ENCODE measurements at regions of chr12 and their contacts with region 1.

Region 1: GRCh38 chr12:2902272-2902880 is 11.7 kb downstream of the TULP3 start:
- DNase-seq: no peak
- H3K4me3 ChIP-seq: no peak overlapping the region
- H3K27ac ChIP-seq: no peak overlapping the region
- H3K4me1 ChIP-seq: no peaks in the 10 kb centered on the region
- H3K27me3 ChIP-seq: no peaks in the 10 kb centered on the region
- CTCF ChIP-seq: no peak

Region 2: GRCh38 chr12:2783936-2784600 is 118.3 kb before region 1 on chr12:
- CTCF ChIA-PET with region 1: interaction called, 11 read pairs
- POLR2A ChIA-PET with region 1: no interaction called
- intact Hi-C with region 1: no loop called
- DNase-seq: peak in 1 of 2 experiments; percentile 61
- H3K4me3 ChIP-seq: no peak overlapping the region
- H3K27ac ChIP-seq: no peak overlapping the region
- H3K4me1 ChIP-seq: no peaks in the 10 kb centered on the region
- H3K27me3 ChIP-seq: peaks cover 84% of the 10 kb centered on the region
- CTCF ChIP-seq: peak; percentile 93

Region 3: GRCh38 chr12:2890388-2891239 is 11.8 kb before region 1 on chr12 and contains the start of gene TULP3:
- CTCF ChIA-PET with region 1: interaction called, 3 read pairs
- POLR2A ChIA-PET with region 1: interaction called, 22 read pairs
- intact Hi-C with region 1: no loop called
- DNase-seq: peak; percentile 93 to 99
- H3K4me3 ChIP-seq: peak within 1 kb of the TSS; percentile 80
- H3K27ac ChIP-seq: peak within 1 kb of the TSS; percentile 74
- H3K4me1 ChIP-seq: peaks cover 35% of the 10 kb centered on the region
- H3K27me3 ChIP-seq: no peaks in the 10 kb centered on the region
- CTCF ChIP-seq: no peak
- total RNA-seq, gene TULP3: 39.0 and 54.6 TPM in 2 replicates

Measured in PC-9 (cell line).